ENCODE measurements at regions of chr17 and their contacts with region 1.

Region 1: GRCh38 chr17:59427425-59427921 is 96.0 kb downstream of the YPEL2 start:
- DNase-seq: peak; percentile 98
- H3K4me3 ChIP-seq: peak overlapping the region in 1 of 3 experiments; percentile 2
- H3K27ac ChIP-seq: peak overlapping the region; percentile 91
- H3K4me1 ChIP-seq: peaks cover 68% of the 10 kb centered on the region
- H3K27me3 ChIP-seq: no peaks in the 10 kb centered on the region
- CTCF ChIP-seq: no peak
- POLR2A ChIP-seq: peak; percentile 59

Region 2: GRCh38 chr17:59244081-59244480 is 183.4 kb before region 1 on chr17:
- CTCF ChIA-PET with region 1: no interaction called
- POLR2A ChIA-PET with region 1: no interaction called
- dilution Hi-C with region 1: no loop called
- intact Hi-C with region 1: no loop called
- DNase-seq: no peak
- H3K4me3 ChIP-seq: no peak overlapping the region
- H3K27ac ChIP-seq: no peak overlapping the region
- H3K4me1 ChIP-seq: no peaks in the 10 kb centered on the region
- H3K27me3 ChIP-seq: no peaks in the 10 kb centered on the region
- CTCF ChIP-seq: no peak
- POLR2A ChIP-seq: no peak

Region 3: DNA sequence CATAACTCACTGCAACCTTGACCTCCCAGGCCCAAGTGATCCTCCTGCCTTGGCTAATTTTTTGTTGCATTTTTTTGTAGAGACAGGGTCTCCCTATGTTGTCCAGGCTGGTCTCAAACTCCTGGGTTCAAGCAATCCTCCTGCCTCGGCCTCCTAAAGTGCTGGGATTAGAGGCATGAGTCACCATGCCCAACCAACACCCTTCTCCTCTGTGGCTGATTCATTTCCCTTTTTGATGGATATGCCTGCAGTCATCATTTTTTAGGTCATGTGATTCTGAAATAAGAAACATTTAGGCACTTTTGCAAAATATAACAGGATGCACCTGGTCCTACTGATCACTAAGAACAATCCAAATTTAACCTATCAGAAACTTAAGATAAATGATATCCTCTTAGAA is 140.0 kb before region 1 on chr17:
- CTCF ChIA-PET with region 1: no interaction called
- POLR2A ChIA-PET with region 1: no interaction called
- dilution Hi-C with region 1: no loop called
- intact Hi-C with region 1: loop called (anchors 1 kb)
- DNase-seq: peak; percentile 93
- H3K4me3 ChIP-seq: no peak overlapping the region
- H3K27ac ChIP-seq: peak overlapping the region; percentile 92
- H3K4me1 ChIP-seq: peaks cover 17% of the 10 kb centered on the region
- H3K27me3 ChIP-seq: no peaks in the 10 kb centered on the region
- CTCF ChIP-seq: no peak
- POLR2A ChIP-seq: no peak

Region 4: DNA sequence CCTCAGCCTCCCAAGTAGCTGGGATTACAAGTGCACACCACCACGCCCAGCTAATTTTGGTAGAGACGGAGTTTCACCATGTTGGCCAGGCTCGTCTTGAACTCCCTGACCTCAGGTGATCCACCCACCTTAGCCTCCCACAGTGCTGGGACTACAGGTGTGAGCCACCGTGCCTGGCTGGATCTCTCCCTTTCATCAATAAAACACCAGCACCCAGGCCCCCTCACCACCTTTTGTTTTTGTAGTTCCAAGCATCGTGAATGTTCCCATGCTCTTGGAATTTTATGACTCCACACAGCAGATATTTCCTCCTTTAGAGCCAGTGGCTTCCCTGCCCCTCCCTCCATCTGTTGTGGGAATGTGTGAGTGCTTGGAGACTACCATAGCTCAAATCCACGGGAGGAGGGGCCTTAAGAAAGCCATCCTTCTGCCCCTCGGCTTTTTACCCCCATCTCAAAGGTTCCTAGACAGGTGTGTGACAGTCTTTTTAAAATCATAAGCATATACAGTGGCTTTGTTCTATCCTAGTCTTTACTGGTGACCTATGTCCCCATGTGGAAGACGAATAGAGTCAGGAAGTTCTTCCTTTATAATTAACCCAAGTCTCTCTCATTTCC is 48.9 kb before region 1 on chr17:
- CTCF ChIA-PET with region 1: interaction called, 8 read pairs
- POLR2A ChIA-PET with region 1: interaction called, 6 read pairs
- dilution Hi-C with region 1: no loop called
- intact Hi-C with region 1: loop called (anchors 1 kb)
- DNase-seq: peak; percentile 93
- H3K4me3 ChIP-seq: no peak overlapping the region
- H3K27ac ChIP-seq: peak overlapping the region; percentile 84
- H3K4me1 ChIP-seq: peaks cover 59% of the 10 kb centered on the region
- H3K27me3 ChIP-seq: no peaks in the 10 kb centered on the region
- CTCF ChIP-seq: no peak
- POLR2A ChIP-seq: no peak

Region 5: GRCh38 chr17:59466946-59467801 is 39.7 kb after region 1 on chr17:
- CTCF ChIA-PET with region 1: no interaction called
- POLR2A ChIA-PET with region 1: no interaction called
- dilution Hi-C with region 1: no loop called
- intact Hi-C with region 1: no loop called
- DNase-seq: no peak
- H3K4me3 ChIP-seq: no peak overlapping the region
- H3K27ac ChIP-seq: no peak overlapping the region
- H3K4me1 ChIP-seq: no peaks in the 10 kb centered on the region
- H3K27me3 ChIP-seq: no peaks in the 10 kb centered on the region
- CTCF ChIP-seq: no peak
- POLR2A ChIP-seq: no peak

Region 6: DNA sequence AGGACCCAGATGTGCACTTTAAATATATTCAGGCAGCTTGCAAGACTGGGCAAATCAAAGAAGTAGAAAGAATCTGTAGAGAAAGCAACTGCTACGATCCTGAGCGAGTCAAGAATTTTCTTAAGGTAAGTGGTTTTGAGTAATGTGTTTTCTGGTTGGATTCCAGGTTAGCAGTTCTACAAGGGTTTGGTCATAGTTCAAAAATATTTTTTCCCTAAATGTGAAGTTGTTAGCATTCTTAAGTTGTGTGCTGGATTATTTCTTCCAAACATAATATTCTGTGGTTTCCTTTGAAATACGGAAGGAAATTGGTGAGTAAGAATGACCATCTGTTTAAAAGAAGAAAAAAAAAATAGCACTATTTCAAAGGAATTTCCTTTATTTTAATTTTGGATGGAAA is 241.3 kb after region 1 on chr17:
- CTCF ChIA-PET with region 1: no interaction called
- POLR2A ChIA-PET with region 1: no interaction called
- dilution Hi-C with region 1: no loop called
- intact Hi-C with region 1: loop called (anchors 1 kb)
- DNase-seq: peak; percentile 94
- H3K4me3 ChIP-seq: peak overlapping the region in 2 of 3 experiments; percentile 36 to 58
- H3K27ac ChIP-seq: peak overlapping the region; percentile 96
- H3K4me1 ChIP-seq: peaks cover 55% of the 10 kb centered on the region
- H3K27me3 ChIP-seq: no peaks in the 10 kb centered on the region
- CTCF ChIP-seq: no peak
- POLR2A ChIP-seq: no peak